ENCODE measurements at regions of chr14 and their contacts with region 1.

Region 1: DNA sequence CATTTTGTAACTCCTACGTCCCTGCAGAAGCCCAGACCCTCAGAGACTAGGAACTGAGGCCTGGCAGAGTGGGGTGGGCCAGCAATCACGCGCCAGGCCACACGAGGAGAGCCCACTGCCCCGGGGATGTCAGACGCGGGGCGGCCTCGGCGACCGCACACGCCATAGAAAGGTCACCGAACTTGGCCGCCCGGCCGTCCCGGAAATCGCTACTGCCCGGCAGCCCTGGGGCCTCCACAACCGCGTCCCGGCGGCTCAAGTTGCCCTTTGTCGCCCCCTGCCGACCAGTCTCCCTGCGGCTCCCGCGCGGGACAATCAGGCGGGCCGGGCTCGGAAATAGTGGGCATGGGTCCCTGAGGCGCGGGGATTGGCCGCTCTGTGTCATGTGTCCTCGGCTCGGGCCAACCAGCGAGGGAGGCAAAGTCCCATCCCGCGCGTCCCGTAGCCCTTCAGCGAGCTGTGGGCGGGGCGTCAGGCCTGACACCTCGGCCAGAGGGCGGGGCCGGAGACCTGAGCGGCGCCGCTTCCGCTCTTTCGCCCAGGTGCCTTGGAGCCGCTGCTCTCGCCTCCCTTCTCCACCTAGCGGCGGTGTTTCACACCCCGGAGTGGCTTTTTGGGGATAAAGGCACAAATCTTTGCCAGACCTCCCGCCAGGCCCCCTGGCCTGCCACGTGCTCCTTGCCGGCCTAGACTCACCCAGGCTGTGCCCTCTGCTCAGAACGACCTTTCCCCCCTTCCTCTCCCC is 33.4 kb upstream of the DEGS2 start:
- DNase-seq: peak; percentile 99
- H3K4me3 Mint-ChIP-seq: peak overlapping the region; percentile 57
- H3K27ac Mint-ChIP-seq: peak overlapping the region; percentile 79
- H3K4me1 Mint-ChIP-seq: peaks cover 9% of the 10 kb centered on the region
- H3K27me3 Mint-ChIP-seq: no peaks in the 10 kb centered on the region
- CTCF ChIP-seq: peak; percentile 78

Region 2: GRCh38 chr14:99982537-99983250 is 210.2 kb before region 1 on chr14:
- CTCF ChIA-PET with region 1: interaction called, 4 read pairs
- intact Hi-C with region 1: loop called (anchors 2 kb)
- DNase-seq: peak; percentile 59
- H3K4me3 Mint-ChIP-seq: no peak overlapping the region
- H3K27ac Mint-ChIP-seq: no peak overlapping the region
- H3K4me1 Mint-ChIP-seq: peaks cover 8% of the 10 kb centered on the region
- H3K27me3 Mint-ChIP-seq: no peaks in the 10 kb centered on the region
- CTCF ChIP-seq: peak; percentile 70

Region 3: DNA sequence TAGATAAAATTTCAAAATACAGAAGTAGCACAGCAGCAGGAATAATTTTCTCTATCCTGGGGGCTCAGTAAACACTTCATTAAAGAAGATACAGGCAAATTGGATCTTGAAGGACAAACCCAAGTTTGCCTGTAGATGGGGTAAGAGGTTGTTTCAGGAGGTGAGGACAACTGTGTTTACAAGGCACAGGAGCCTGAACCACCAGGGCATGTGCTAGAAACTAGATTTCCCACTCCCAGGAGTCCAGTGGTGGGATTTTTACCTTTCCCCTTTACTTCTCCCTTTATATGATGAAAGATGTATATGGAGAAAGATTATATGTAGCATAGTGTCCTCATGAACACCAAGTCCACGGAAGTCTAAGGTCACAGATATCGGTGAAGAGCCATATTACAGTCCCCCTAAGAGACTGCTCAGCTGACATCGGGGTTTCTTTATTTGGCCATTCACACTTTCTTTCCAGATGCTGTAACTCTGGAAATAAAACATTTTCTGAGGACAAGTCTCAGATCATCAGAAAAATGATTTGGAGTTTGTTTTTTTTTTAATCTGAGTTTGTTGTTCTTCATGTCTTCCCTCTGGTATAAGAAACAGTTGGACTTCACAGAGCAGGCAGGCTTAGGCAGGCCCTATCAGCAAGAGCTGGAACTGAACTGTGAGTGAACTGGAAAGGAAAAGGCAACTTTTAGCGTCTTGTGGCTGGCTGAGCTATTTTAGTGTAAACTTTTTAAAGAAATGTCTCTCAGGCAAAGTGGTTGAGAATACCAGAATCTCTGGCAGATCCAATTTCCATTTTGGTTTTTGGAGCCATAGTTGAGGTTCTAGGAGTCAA is 135.7 kb before region 1 on chr14:
- CTCF ChIA-PET with region 1: no interaction called
- intact Hi-C with region 1: loop called (anchors 1 kb)
- DNase-seq: no peak
- H3K4me3 Mint-ChIP-seq: no peak overlapping the region
- H3K27ac Mint-ChIP-seq: no peak overlapping the region
- H3K4me1 Mint-ChIP-seq: peaks cover 11% of the 10 kb centered on the region
- H3K27me3 Mint-ChIP-seq: no peaks in the 10 kb centered on the region
- CTCF ChIP-seq: no peak

Region 4: DNA sequence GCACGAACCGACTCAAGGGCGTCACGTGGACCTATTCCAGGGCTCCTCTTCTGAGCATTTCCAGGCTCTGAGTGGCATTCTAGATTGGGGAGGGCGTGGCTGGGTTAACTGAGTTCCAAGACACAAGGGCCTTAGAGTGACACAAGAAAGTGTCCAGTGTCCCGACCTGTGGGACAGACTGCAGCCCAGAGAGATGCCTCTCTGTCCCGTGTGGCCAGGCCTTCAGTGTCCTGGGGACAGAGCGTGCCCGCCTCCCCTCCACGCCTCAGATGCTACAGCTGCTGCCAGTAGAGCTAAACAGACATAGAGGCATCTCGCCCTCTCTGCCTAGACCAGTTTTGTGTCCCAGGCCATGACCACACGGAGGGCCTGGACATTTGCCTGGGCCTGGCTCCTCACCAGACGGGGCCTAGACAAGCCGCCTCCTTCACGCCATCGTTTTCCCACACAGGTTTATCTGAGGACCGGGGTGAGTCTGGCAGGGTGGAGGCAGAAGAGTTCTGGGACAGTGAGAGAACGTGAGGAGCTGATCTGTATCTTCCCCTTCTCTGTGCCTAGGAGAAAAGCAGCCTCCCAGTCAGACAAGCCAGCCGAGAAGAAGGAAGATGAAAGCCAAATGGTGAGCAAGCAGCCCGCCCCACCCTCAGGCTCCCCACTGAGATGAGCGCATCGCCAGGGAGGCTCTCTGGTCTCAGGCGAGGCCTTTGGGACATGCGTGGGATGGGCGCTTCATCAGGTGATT is 60.5 kb before region 1 on chr14:
- CTCF ChIA-PET with region 1: interaction called, 7 read pairs
- intact Hi-C with region 1: loop called (anchors 5 kb)
- DNase-seq: no peak
- H3K4me3 Mint-ChIP-seq: no peak overlapping the region
- H3K27ac Mint-ChIP-seq: no peak overlapping the region
- H3K4me1 Mint-ChIP-seq: peaks cover 33% of the 10 kb centered on the region
- H3K27me3 Mint-ChIP-seq: no peaks in the 10 kb centered on the region
- CTCF ChIP-seq: no peak

Region 5: GRCh38 chr14:100155042-100155846 is 37.6 kb before region 1 on chr14:
- CTCF ChIA-PET with region 1: no interaction called
- intact Hi-C with region 1: no loop called
- DNase-seq: peak; percentile 54
- H3K4me3 Mint-ChIP-seq: no peak overlapping the region
- H3K27ac Mint-ChIP-seq: no peak overlapping the region
- H3K4me1 Mint-ChIP-seq: peaks cover 26% of the 10 kb centered on the region
- H3K27me3 Mint-ChIP-seq: no peaks in the 10 kb centered on the region
- CTCF ChIP-seq: peak; percentile 70